Activated T-helper 2 cell treated with anti-CD3 and anti-CD28 coated beads, Interferon-gamma antibody, Interleukin-2, Interleukin-4, amounts not matched to agents 10 μg/mL and 5 μg/mL and 100 μg/mL, durations not matched to agents 14 hours and 24 hours and 36 hours (primary cell): ENCODE measurements at regions of chr10 and their contacts with region 1.

Region 1: GRCh38 chr10:23199768-23200511 is 7.8 kb downstream of the PTF1A start:
- DNase-seq: no peak
- H3K4me3 Mint-ChIP-seq: no peak overlapping the region
- H3K27ac Mint-ChIP-seq: no peak overlapping the region
- H3K4me1 Mint-ChIP-seq: no peaks in the 10 kb centered on the region
- H3K27me3 Mint-ChIP-seq: peaks cover 83% of the 10 kb centered on the region

Region 2: DNA sequence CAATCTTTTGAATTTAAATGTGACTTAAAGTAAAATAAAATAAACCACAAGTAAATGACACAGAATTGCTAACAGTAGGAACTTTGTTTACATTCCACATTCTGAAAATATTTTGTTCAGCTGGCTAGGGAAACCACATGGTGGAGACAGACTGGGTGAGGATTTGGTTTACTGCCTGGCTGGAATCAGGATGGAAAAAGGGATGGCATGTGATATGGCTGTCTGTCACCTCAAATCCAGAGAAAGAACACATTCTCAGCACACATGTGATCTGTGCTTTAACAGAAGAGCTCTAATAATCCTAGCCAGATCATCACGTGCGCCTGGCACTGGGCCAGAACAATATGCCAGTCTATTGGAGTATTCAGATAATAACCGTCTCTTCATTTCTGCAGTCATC is 394.7 kb before region 1 on chr10:
- intact Hi-C with region 1: no loop called
- DNase-seq: no peak
- H3K4me3 Mint-ChIP-seq: no peak overlapping the region
- H3K27ac Mint-ChIP-seq: no peak overlapping the region
- H3K4me1 Mint-ChIP-seq: no peaks in the 10 kb centered on the region
- H3K27me3 Mint-ChIP-seq: peaks cover 14% of the 10 kb centered on the region

Region 3: GRCh38 chr10:23693501-23693901 is 493.6 kb after region 1 on chr10:
- intact Hi-C with region 1: loop called (anchors 2 kb)
- DNase-seq: no peak
- H3K4me3 Mint-ChIP-seq: no peak overlapping the region
- H3K27ac Mint-ChIP-seq: no peak overlapping the region
- H3K4me1 Mint-ChIP-seq: no peaks in the 10 kb centered on the region
- H3K27me3 Mint-ChIP-seq: peaks cover 54% of the 10 kb centered on the region